Activated CD4-positive, alpha-beta memory T cell treated with anti-CD3 and anti-CD28 coated beads for 36 hours (primary cell): ENCODE measurements at regions of chr4 and their contacts with region 1.

Region 1: GRCh38 chr4:185395956-185396723 is 416 bp upstream of the LRP2BP start:
- DNase-seq: peak; percentile 98
- H3K4me3 Mint-ChIP-seq: peak overlapping the region; percentile 95
- H3K27ac Mint-ChIP-seq: peak overlapping the region; percentile 97
- H3K4me1 Mint-ChIP-seq: peaks cover 37% of the 10 kb centered on the region
- H3K27me3 Mint-ChIP-seq: no peaks in the 10 kb centered on the region

Region 2: DNA sequence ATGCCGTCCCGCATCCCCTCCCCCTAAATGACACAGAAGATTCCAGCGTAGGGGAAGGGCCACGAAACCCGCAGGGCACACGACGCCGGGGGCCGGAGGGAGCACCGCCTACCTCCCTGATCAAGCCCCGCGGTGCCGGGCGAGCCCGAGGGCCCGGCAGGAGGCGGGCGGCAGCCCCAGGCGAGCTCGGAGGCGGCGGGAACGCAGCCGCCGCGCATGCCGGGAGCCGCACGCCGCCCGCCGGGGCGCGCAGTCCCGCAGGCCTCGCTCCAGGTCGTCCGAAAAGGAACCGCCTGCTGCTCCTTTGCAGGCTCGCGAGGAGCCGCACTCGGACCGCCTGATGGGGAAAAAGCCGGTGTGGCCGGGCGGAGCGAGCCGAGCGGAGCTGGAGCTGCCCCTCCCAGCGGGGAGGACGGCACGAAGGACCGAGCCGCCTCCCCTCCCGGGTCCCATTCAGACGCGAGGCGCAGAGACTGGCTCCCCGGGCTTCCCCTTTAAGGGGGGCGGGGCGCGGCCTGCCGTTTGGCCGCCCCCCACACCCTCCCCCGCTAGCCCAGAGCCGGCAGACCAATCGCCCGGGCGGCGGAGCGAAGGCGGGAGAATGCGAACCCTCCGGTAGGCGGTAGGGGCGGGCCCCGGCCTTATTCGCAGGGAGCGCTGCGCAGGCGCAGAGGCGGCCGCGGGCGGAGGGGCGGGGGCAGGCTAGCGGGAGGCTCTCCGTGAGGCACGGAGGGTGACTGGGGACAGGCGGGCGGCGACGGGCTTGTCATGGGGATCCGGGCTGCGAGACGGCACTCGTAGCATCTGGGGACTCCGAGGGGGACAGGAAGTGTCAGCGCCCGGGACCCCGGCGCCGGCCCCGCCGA is 1891.8 kb before region 1 on chr4:
- CTCF ChIA-PET with region 1: no interaction called
- POLR2A ChIA-PET with region 1: no interaction called
- intact Hi-C with region 1: loop called (anchors 10 kb)
- DNase-seq: peak; percentile 99
- H3K4me3 Mint-ChIP-seq: peak overlapping the region; percentile 93
- H3K27ac Mint-ChIP-seq: peak overlapping the region; percentile 92
- H3K4me1 Mint-ChIP-seq: peaks cover 28% of the 10 kb centered on the region
- H3K27me3 Mint-ChIP-seq: no peaks in the 10 kb centered on the region

Region 3: GRCh38 chr4:185142912-185143595 is 253.1 kb before region 1 on chr4 and contains the start of gene SLC25A4:
- CTCF ChIA-PET with region 1: interaction called, 3 read pairs
- POLR2A ChIA-PET with region 1: no interaction called
- intact Hi-C with region 1: loop called (anchors 1 kb)
- DNase-seq: peak; percentile 90
- H3K4me3 Mint-ChIP-seq: peak within 1 kb of the TSS; percentile 80
- H3K27ac Mint-ChIP-seq: no peak within 1 kb of the TSS
- H3K4me1 Mint-ChIP-seq: peaks cover 13% of the 10 kb centered on the region
- H3K27me3 Mint-ChIP-seq: peaks cover 25% of the 10 kb centered on the region
- total RNA-seq, gene SLC25A4: 7.7 to 8.4 TPM

Region 4: GRCh38 chr4:185209031-185209851 is 186.9 kb before region 1 on chr4 and contains the start of gene SNX25:
- CTCF ChIA-PET with region 1: interaction called, 4 read pairs
- POLR2A ChIA-PET with region 1: interaction called, 8 read pairs
- intact Hi-C with region 1: loop called (anchors 1 kb)
- DNase-seq: peak; percentile 91
- H3K4me3 Mint-ChIP-seq: peak within 1 kb of the TSS; percentile 88
- H3K27ac Mint-ChIP-seq: peak within 1 kb of the TSS; percentile 72
- H3K4me1 Mint-ChIP-seq: peaks cover 46% of the 10 kb centered on the region
- H3K27me3 Mint-ChIP-seq: no peaks in the 10 kb centered on the region
- total RNA-seq, gene SNX25: 18.9 to 21.6 TPM

Region 5: DNA sequence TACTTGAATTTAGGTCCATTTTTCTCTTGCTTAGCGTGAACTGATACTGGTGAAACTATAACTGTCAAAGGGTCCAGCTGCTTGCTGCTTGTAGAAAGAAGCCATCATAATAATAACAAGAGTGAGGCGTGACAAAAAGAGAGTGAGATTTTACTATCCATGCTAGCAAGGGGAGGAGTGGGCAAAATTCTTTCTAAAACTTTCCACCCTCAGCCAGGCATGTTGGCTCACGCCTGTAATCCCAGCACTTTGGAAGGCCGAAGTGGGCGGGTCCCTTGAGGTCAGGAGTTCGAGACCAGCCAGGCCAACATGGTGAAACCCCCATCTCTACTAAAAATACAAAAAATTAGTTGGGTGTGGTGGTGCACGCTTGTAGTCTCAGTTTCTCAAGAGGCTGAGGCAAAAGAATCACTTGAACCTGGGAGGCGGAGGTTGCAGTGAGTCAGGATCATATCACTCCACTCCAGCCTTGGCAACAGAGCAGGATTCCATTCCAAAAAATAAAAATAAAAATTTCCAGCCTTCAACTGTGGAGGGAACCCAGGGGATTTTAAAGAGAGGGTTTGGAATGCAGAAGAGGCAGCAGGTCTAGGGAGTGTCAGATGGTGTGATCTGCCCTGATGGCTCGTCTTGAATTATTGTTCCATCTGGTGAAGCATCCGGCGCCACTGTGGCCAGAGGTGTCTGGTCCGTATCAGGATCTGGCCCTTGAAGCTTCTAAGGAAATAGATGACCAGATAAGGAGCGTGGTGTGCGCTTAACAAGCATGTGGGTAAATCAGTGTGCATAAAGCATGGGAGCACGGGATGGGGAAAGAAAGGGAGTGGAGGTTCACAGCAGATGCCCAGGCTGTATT is 52.2 kb before region 1 on chr4:
- CTCF ChIA-PET with region 1: no interaction called
- POLR2A ChIA-PET with region 1: interaction called, 4 read pairs
- intact Hi-C with region 1: loop called (anchors 1 kb)
- DNase-seq: peak; percentile 33
- H3K4me3 Mint-ChIP-seq: no peak overlapping the region
- H3K27ac Mint-ChIP-seq: peak overlapping the region; percentile 79
- H3K4me1 Mint-ChIP-seq: peaks cover 65% of the 10 kb centered on the region
- H3K27me3 Mint-ChIP-seq: no peaks in the 10 kb centered on the region

Region 6: DNA sequence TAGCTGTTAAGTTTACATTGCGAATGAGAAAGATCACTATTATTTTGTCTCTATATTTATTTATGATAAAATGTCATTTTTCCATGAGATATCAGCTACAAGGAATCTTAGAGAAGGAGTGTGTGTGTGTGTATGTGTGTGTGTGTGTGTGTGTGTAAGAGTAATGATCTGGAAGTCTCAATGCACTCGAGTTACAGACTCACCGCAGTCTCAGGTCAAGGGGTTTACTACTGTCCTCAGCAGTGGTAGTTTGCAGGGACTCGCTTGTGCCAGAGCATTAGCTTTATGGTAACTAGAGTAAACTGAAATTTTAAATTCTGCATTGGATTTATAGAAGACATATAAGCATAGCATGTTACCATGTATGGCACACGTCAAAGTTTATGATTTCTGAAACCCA is 31.3 kb before region 1 on chr4:
- CTCF ChIA-PET with region 1: no interaction called
- POLR2A ChIA-PET with region 1: no interaction called
- intact Hi-C with region 1: no loop called
- DNase-seq: no peak
- H3K4me3 Mint-ChIP-seq: no peak overlapping the region
- H3K27ac Mint-ChIP-seq: no peak overlapping the region
- H3K4me1 Mint-ChIP-seq: no peaks in the 10 kb centered on the region
- H3K27me3 Mint-ChIP-seq: no peaks in the 10 kb centered on the region

Region 7: GRCh38 chr4:185425647-185426352 is 29.7 kb after region 1 on chr4 and contains the start of gene UFSP2:
- CTCF ChIA-PET with region 1: interaction called, 3 read pairs
- POLR2A ChIA-PET with region 1: interaction called, 12 read pairs
- intact Hi-C with region 1: loop called (anchors 1 kb)
- DNase-seq: peak; percentile 90
- H3K4me3 Mint-ChIP-seq: peak within 1 kb of the TSS; percentile 83
- H3K27ac Mint-ChIP-seq: peak within 1 kb of the TSS; percentile 97
- H3K4me1 Mint-ChIP-seq: peaks cover 23% of the 10 kb centered on the region
- H3K27me3 Mint-ChIP-seq: no peaks in the 10 kb centered on the region
- total RNA-seq, gene UFSP2: 28.3 to 33.0 TPM

Region 8: GRCh38 chr4:186201535-186202230 is 805.5 kb after region 1 on chr4:
- CTCF ChIA-PET with region 1: interaction called, 3 read pairs
- POLR2A ChIA-PET with region 1: no interaction called
- intact Hi-C with region 1: loop called (anchors 1 kb)
- DNase-seq: peak; percentile 83
- H3K4me3 Mint-ChIP-seq: peak overlapping the region; percentile 21
- H3K27ac Mint-ChIP-seq: peak overlapping the region; percentile 26
- H3K4me1 Mint-ChIP-seq: peaks cover 27% of the 10 kb centered on the region
- H3K27me3 Mint-ChIP-seq: no peaks in the 10 kb centered on the region